ENCODE measurements at regions of chr12 and their contacts with region 1.

Region 1: DNA sequence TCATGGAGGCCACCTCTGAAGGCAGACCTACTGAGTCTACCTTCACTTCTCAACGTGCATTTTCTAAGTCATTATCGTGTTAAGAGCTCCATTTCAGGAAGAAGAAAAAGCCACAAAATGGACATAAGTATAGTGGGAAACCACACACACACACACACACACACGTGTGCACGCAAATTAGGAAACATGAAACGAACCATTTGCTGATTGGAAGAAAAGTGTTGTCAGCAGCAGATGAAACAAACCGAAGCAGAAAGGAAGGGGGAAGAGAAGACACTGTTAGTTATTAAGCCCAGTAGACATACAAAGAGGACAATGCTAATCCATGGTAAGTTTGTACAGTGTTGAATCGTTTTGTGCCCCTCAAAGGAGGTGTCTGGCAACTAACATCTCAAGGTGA is 9.9 kb upstream of the VPS33A start:
- DNase-seq: no peak
- ATAC-seq: no peak
- H3K4me3 ChIP-seq: no peak overlapping the region
- H3K27ac ChIP-seq: no peak overlapping the region
- H3K4me1 ChIP-seq: no peaks in the 10 kb centered on the region
- H3K27me3 ChIP-seq: no peaks in the 10 kb centered on the region
- CTCF ChIP-seq: no peak
- POLR2A ChIP-seq: no peak

Region 2: DNA sequence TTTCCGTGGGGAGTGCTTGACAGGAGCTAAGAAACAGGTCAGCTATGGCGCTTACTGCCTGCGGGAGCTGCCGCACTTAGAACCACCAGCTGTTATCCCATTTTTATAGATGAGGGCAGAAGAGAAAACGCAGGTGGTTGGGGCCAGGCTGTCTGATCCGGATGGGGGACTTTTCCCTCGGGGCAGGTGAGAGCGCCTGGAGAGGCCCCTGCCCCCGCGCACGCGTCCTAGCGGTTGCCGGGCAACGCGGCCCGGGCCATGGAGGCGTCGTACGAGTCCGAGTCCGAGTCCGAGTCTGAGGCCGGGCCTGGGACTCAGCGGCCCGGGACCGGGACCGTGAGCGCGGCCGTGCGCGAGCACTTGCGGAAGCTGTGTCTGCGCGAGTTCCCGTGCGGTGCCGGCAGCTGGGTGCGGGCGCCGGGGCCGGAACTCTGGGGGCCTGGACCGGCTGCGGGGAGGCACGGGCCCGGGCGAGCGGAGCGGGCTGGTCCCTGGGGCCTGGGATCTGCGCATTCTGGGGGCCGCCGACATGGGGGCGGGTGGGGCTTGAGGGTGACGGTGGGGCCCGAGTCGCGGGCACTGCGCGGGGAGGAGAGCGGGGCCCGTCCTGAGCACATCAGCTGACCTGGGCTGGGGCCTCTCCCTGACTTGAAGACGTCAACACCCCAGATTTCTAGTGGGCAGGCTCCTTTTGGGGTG is 93.2 kb before region 1 on chr12 and contains the start of gene LRRC43:
- in situ Hi-C with region 1: no loop called
- intact Hi-C with region 1: no loop called
- DNase-seq: no peak
- ATAC-seq: peak; percentile 26 to 30
- H3K4me3 ChIP-seq: peak within 1 kb of the TSS; percentile 39 to 64 (median 53)
- H3K27ac ChIP-seq: no peak within 1 kb of the TSS
- H3K4me1 ChIP-seq: no peaks in the 10 kb centered on the region
- H3K27me3 ChIP-seq: peaks cover 0 to 10% (median 0%) of the 10 kb centered on the region in 3 donors
- CTCF ChIP-seq: no peak
- POLR2A ChIP-seq: no peak
- total RNA-seq, gene LRRC43: not detected

Region 3: GRCh38 chr12:122322501-122322900 is 46.3 kb after region 1 on chr12:
- in situ Hi-C with region 1: no loop called
- intact Hi-C with region 1: loop called (anchors 5 kb)
- DNase-seq: no peak
- ATAC-seq: no peak
- H3K4me3 ChIP-seq: no peak overlapping the region
- H3K27ac ChIP-seq: peak overlapping the region in 1 of 4 donors; percentile 5
- H3K4me1 ChIP-seq: peaks cover 23 to 30% of the 10 kb centered on the region in 2 donors
- H3K27me3 ChIP-seq: no peaks in the 10 kb centered on the region
- CTCF ChIP-seq: no peak
- POLR2A ChIP-seq: no peak

Region 4: DNA sequence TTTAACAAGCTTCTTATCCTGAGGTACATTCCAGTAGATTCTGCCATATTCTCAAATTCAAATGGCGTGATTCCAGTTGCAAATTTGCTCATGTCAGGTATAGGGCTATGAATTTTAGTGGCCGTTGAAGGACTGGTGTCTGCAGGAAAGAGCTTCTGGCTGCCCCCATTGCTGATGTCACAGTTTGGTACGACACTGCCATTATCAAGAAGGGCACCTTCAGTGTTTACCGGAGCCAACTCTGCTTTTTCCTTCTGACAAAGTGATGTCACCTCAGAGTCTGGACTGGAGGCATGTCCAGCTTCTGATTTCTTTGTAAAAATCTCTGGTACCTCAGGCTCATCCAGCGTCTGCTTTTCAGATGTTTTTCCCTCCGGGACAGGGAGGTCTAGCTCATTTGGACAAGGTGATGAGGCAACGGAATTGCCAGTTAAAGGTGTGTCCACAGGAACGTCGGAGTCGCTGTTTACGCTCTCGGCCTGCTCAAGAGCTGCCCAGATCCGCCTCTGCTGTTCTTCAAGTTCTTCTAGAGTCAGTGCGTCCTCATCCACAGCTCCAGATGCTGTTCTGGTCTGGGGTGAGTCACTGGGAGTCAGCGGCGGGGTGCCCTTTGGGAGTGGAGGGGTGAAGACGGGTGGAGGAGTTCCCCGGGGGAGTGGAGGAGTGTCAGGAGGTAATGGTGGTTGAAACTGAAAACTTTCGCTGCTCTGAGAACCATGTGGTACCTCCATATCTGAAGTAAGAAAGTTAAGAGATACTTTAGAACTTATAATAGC is 197.5 kb after region 1 on chr12:
- in situ Hi-C with region 1: no loop called
- intact Hi-C with region 1: no loop called
- DNase-seq: no peak
- ATAC-seq: peak in 1 of 2 donors; percentile 29
- H3K4me3 ChIP-seq: no peak overlapping the region
- H3K27ac ChIP-seq: peak overlapping the region in 3 of 4 donors; percentile 10 to 45 (median 16)
- H3K4me1 ChIP-seq: peaks cover 5 to 7% of the 10 kb centered on the region in 2 donors
- H3K27me3 ChIP-seq: no peaks in the 10 kb centered on the region
- CTCF ChIP-seq: no peak
- POLR2A ChIP-seq: no peak